ENCODE measurements at regions of chr11 and their contacts with region 1.

Region 1: DNA sequence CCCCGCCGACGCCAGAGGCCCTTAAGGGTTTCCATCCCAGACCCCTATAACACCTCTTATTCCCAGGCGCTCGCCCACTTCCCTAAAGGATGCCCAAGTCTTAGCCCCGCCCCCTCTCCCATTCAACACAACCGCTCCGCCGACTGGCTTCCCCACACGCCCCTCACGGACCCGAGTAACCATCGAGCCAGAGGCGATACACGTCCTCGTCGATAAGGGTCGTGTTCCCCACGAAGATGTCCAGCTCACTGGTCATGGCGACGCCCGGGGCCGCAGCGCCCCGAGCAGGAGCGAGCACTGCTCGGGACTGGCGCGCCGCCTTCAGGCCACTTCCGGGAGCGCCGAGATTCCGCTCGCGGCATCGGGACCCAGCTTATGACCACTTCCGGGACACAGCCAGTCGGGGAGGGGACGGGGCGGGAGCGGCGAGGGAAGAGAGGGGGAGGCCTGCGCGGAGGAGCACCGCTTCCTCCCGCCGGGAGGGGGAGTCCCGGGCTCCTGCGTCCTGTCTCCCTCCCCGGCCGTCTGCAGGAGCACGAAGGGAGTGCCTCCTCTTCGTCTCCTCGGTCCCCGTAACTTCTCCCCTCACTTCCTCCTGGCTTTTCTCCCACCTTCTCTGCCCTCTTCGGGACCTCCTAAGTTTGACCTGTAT is at the start of gene FIBP:
- DNase-seq: peak; percentile 95 to 97 (median 97)
- H3K4me3 ChIP-seq: peak within 1 kb of the TSS; percentile 63 to 82 (median 69)
- H3K4me3 Mint-ChIP-seq: peak within 1 kb of the TSS; percentile 95 to 99
- H3K27ac ChIP-seq: peak within 1 kb of the TSS; percentile 88 to 95
- H3K27ac Mint-ChIP-seq: peak within 1 kb of the TSS; percentile 98 to 100 (median 99)
- H3K4me1 ChIP-seq: peaks cover 57 to 81% of the 10 kb centered on the region in 2 donors
- H3K4me1 Mint-ChIP-seq: peaks cover 63% of the 10 kb centered on the region
- H3K27me3 ChIP-seq: no peaks in the 10 kb centered on the region
- H3K27me3 Mint-ChIP-seq: peaks cover 0 to 7% (median 0%) of the 10 kb centered on the region in 3 donors
- CTCF ChIP-seq: peak; percentile 95
- polyA plus RNA-seq, gene FIBP: 79.1 to 109 (median 101) TPM

Region 2: GRCh38 chr11:65791691-65792213 is 96.5 kb before region 1 on chr11:
- intact Hi-C with region 1: no loop called
- DNase-seq: peak; percentile 42 to 73 (median 60)
- H3K4me3 ChIP-seq: no peak overlapping the region
- H3K4me3 Mint-ChIP-seq: no peak overlapping the region
- H3K27ac ChIP-seq: no peak overlapping the region
- H3K27ac Mint-ChIP-seq: peak overlapping the region in 3 of 7 donors; percentile 4 to 25 (median 16)
- H3K4me1 ChIP-seq: peaks cover 24 to 27% of the 10 kb centered on the region in 2 donors
- H3K4me1 Mint-ChIP-seq: peaks cover 28% of the 10 kb centered on the region
- H3K27me3 ChIP-seq: peaks cover 13 to 36% of the 10 kb centered on the region in 2 donors
- H3K27me3 Mint-ChIP-seq: peaks cover 32 to 45% (median 41%) of the 10 kb centered on the region in 3 donors
- CTCF ChIP-seq: no peak

Region 3: DNA sequence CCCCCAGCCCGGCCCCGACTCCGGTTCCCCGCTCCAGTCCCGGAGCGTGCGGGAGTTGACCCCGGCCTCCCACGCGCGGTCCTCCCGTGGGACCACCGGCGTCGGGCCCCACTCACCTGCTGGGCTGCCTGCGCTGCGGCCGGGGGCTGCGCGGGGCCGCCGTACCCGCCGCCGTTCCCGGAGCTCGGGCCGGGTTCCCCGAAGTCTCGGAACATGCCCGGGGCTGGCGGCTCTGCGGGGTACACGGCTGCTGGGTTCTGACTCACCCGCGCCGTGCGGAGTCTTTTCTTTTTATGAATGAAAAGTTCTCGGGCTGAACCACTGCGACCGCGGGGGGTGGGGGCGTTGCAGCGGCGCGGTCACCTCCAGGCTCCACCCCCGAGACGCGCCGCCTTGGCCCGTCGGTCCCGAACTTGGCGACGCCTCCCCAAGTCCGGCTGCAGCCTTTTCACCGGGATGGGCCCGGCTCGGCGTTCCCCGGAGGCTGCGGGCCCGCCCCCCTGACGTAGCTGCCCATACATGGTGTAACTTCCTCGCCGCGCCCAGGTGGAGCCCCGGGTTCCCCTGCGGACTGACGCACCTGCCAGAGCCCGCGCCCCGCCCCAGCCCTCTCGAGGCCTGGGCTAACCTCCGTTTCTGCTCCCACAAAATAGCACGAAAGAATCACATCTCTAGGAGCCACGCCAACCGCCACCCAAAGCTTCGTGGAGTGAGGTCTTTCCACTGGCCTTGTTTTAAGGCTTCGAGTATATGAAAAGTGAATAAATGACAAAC is 12.0 kb after region 1 on chr11 and contains the start of gene FOSL1:
- intact Hi-C with region 1: loop called in 1 of 2 experiments (anchors 1 kb)
- DNase-seq: peak; percentile 89 to 97 (median 96)
- H3K4me3 ChIP-seq: peak within 1 kb of the TSS; percentile 60 to 92 (median 85)
- H3K4me3 Mint-ChIP-seq: peak within 1 kb of the TSS; percentile 85 to 86
- H3K27ac ChIP-seq: peak within 1 kb of the TSS; percentile 36 to 84
- H3K27ac Mint-ChIP-seq: peak within 1 kb of the TSS; percentile 81 to 92 (median 90)
- H3K4me1 ChIP-seq: peaks cover 22 to 28% of the 10 kb centered on the region in 2 donors
- H3K4me1 Mint-ChIP-seq: peaks cover 16% of the 10 kb centered on the region
- H3K27me3 ChIP-seq: no peaks in the 10 kb centered on the region
- H3K27me3 Mint-ChIP-seq: peaks cover 0 to 5% (median 4%) of the 10 kb centered on the region in 3 donors
- CTCF ChIP-seq: no peak
- polyA plus RNA-seq, gene FOSL1: 2.5 to 28.2 (median 2.5) TPM

Region 4: DNA sequence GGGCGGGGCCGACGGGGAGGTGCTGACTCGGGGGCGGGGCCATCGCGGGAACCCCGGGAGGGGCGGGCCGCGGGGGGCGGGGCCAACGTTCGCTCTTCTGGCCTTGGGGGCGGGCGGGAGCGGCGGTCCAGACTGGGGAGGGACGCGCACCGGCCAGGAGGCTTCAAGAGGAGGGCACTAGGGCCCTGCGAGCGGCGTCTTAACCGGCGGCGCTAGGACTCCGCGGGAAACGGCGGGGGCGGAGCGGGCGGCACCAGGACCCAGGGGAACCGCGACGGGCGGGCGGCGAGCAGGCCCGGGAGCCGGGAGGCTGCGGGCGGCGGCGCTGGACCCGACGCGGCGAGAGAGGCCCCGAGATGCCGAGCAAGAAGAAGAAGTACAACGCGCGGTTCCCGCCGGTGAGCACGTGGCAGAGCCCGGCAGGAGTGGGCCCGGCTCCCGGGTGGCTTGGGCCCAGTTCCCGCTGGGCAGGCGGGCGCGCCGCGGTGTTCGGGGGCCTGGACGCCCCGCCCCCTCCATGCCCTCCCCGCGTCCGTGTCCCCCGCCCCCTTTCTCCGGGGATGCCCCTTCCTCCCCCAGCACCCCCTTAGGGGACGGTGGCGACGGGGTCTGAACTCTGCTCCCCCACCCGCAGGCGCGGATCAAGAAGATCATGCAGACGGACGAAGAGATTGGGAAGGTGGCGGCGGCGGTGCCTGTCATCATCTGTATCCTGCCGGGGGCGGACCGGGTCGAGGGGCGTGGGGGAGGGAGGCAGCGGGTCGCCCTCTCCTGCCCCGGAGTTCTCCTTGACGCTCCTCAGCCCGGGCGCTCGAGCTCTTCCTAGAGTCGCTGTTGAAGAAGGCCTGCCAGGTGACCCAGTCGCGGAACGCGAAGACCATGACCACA is 31.1 kb after region 1 on chr11 and contains the start of gene DRAP1:
- intact Hi-C with region 1: loop called in 1 of 2 experiments (anchors 5 kb)
- DNase-seq: peak; percentile 95 to 97 (median 96)
- H3K4me3 ChIP-seq: peak within 1 kb of the TSS; percentile 93 to 99 (median 98)
- H3K4me3 Mint-ChIP-seq: peak within 1 kb of the TSS; percentile 89 to 95
- H3K27ac ChIP-seq: peak within 1 kb of the TSS; percentile 61 to 94
- H3K27ac Mint-ChIP-seq: peak within 1 kb of the TSS; percentile 81 to 93 (median 87)
- H3K4me1 ChIP-seq: peaks cover 55 to 61% of the 10 kb centered on the region in 2 donors
- H3K4me1 Mint-ChIP-seq: peaks cover 55% of the 10 kb centered on the region
- H3K27me3 ChIP-seq: no peaks in the 10 kb centered on the region
- H3K27me3 Mint-ChIP-seq: peaks cover 0 to 2% (median 0%) of the 10 kb centered on the region in 3 donors
- CTCF ChIP-seq: no peak
- polyA plus RNA-seq, gene DRAP1: 68.3 to 97.2 (median 72.1) TPM

Region 5: DNA sequence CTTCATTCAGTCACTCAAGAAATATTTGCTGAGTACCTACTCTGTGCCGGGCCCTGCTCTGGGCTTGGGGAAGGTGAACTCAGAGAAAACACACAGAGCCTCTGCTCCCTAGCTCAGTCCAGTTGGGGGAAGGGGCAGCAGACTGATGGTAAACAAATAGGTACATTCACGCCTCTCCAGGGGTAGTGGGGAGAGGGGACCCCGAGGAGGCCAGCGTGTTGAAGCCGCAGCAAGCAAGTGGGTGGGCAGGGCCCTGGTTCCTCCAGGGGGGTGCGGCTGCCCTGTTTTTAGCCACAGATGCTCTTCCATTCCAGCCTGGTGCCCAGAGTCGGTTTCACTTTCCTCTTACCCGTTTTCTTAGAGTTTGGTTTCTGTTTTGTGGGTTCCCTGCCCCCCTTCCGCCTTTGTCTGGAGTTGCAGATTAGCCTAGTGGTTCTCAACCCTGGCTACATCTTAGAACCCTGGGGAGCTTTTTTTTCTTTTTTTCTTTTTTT is 39.7 kb after region 1 on chr11:
- intact Hi-C with region 1: loop called (anchors 5 kb)
- DNase-seq: peak; percentile 65 to 73 (median 68)
- H3K4me3 ChIP-seq: peak overlapping the region; percentile 22 to 71 (median 39)
- H3K4me3 Mint-ChIP-seq: peak overlapping the region; percentile 77 to 90
- H3K27ac ChIP-seq: peak overlapping the region; percentile 72 to 90
- H3K27ac Mint-ChIP-seq: peak overlapping the region; percentile 85 to 94 (median 93)
- H3K4me1 ChIP-seq: peaks cover 18 to 26% of the 10 kb centered on the region in 2 donors
- H3K4me1 Mint-ChIP-seq: peaks cover 28% of the 10 kb centered on the region
- H3K27me3 ChIP-seq: no peaks in the 10 kb centered on the region
- H3K27me3 Mint-ChIP-seq: peaks cover 0 to 2% (median 1%) of the 10 kb centered on the region in 3 donors
- CTCF ChIP-seq: no peak

Region 6: DNA sequence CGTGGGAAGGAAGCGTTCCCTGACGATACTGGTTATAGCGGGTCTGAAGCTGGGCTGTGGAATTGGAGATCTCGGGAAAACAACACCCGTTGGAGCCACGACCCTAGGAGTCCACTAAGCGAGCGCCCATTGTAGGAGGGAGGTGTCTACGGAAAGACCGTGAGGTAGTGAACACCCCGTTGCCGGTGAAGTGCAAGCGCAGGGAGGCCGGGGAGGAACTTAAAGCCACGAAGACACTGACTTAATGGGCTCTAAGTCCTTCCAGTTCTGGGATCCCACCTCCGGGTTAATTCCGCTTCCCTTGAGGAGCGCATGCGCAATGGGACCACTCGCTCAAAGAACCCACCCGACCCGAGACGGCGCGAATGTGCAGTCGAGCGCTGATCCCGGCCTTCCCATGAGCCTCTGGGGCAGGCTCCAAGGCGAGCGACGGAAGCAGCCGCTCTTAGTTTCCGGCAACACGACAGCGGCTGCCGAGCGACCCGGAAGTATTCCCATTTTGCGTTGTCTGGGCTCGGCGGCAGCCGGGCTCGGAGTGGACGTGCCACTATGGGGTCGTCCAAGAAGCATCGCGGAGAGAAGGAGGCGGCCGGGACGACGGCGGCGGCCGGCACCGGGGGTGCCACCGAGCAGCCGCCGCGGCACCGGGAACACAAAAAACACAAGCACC is 73.1 kb after region 1 on chr11 and contains the start of gene SART1:
- intact Hi-C with region 1: loop called in 1 of 2 experiments (anchors 2 kb)
- DNase-seq: peak; percentile 94 to 97 (median 97)
- H3K4me3 ChIP-seq: peak within 1 kb of the TSS; percentile 74 to 97 (median 87)
- H3K4me3 Mint-ChIP-seq: peak within 1 kb of the TSS; percentile 91 to 95
- H3K27ac ChIP-seq: peak within 1 kb of the TSS; percentile 80 to 92
- H3K27ac Mint-ChIP-seq: peak within 1 kb of the TSS; percentile 95 to 99 (median 97)
- H3K4me1 ChIP-seq: peaks cover 18 to 31% of the 10 kb centered on the region in 2 donors
- H3K4me1 Mint-ChIP-seq: peaks cover 31% of the 10 kb centered on the region
- H3K27me3 ChIP-seq: no peaks in the 10 kb centered on the region
- H3K27me3 Mint-ChIP-seq: peaks cover 0 to 2% (median 2%) of the 10 kb centered on the region in 3 donors
- CTCF ChIP-seq: no peak
- polyA plus RNA-seq, gene SART1: 8.9 to 52.8 (median 16.1) TPM

Region 7: DNA sequence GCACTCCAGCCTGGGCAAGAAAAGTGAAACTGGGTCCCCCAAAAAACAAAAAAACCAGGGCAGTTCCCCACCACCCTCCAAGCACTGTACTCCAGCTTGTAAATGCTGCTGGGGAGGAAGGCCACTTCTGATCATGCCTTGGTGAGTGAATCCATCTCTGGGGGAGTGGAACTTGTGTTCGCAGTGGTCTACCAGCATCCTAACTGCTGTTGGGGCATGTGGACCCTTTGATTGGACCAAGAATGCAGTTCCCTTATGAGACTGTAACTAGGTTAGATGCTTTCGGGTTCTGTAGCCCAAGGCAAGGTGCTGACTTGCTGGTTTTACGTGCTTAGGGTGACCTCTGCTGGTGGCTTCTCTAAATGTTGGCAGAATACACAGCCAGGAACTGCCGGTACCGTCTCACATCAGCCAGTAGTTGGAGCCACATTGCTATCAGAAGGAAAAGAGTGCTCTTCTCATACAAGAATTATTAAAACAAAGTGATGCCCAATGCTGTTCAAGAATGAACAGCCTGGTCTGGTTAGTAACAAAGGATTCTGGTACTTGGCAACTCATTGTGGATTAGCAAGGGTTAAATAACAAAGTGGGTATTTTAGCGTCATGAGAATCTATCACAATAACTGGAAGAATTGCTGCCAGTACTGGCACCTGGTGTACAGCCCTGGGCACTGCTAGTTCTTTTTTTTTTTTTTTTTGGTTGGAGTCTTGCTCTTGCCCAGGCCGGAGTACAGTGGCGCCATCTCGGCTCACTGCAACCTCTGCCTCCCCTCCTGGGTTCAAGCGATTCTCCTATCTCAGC is 100.7 kb after region 1 on chr11:
- intact Hi-C with region 1: loop called (anchors 1 to 5 kb)
- DNase-seq: peak; percentile 90 to 92 (median 90)
- H3K4me3 ChIP-seq: no peak overlapping the region
- H3K4me3 Mint-ChIP-seq: no peak overlapping the region
- H3K27ac ChIP-seq: peak overlapping the region; percentile 5 to 31
- H3K27ac Mint-ChIP-seq: peak overlapping the region; percentile 48 to 87 (median 75)
- H3K4me1 ChIP-seq: peaks cover 16 to 24% of the 10 kb centered on the region in 2 donors
- H3K4me1 Mint-ChIP-seq: peaks cover 12% of the 10 kb centered on the region
- H3K27me3 ChIP-seq: no peaks in the 10 kb centered on the region
- H3K27me3 Mint-ChIP-seq: no peaks in the 10 kb centered on the region
- CTCF ChIP-seq: peak; percentile 99